ENCODE measurements at regions of chr2 and their contacts with region 1.

Region 1: GRCh38 chr2:39679805-39680204 is 14.1 kb downstream of the TMEM178A start:
- DNase-seq: no peak
- ATAC-seq: peak; percentile 72 to 74

Region 2: GRCh38 chr2:39593439-39594393 is 86.1 kb before region 1 on chr2:
- intact Hi-C with region 1: loop called in 1 of 2 experiments (anchors 10 kb)
- DNase-seq: peak; percentile 31
- ATAC-seq: peak; percentile 84 to 93

Region 3: GRCh38 chr2:39737661-39738060 is 57.9 kb after region 1 on chr2:
- intact Hi-C with region 1: no loop called
- DNase-seq: peak; percentile 30
- ATAC-seq: peak; percentile 62 to 83

Measured in left cardiac atrium (tissue), 4 donors.